Right ventricle myocardium superior (tissue), 1 donor: ENCODE measurements at regions of chr3 and their contacts with region 1.

Region 1: GRCh38 chr3:183122257-183122932 is 23.1 kb upstream of the MCCC1 start:
- DNase-seq: no peak
- ATAC-seq: peak; percentile 62

Region 2: DNA sequence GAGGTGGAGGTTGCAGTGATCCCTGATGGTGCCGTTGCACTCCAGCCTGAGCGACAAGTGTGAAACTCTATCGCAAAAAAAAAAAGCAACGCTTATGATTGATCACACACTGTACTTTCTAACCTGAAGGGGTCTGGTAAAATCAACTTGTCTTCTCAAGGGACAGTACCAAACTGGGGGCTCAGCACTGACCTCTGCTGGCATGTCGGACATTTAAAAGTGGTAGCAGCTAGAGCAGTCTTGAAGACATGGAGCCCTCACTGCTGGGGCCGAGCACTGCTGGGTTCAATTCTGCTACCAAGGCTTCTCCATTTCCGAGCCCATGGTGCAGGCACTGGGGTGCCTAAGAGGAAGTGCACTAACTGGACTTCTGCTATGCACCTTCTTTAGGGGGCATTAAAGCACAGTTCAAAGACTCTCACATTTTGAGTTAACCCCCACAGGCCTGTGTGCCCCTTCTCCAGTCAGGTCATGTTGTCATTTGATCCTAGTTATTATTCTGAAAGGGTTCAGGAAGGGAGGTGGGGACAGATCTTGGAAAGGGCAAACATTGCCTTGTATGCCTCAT is 66.6 kb after region 1 on chr3:
- intact Hi-C with region 1: loop called (anchors 5 kb)
- DNase-seq: peak; percentile 50
- ATAC-seq: no peak